Psoas muscle (tissue), 8 donors: ENCODE measurements at regions of chr10 and their contacts with region 1.

Region 1: DNA sequence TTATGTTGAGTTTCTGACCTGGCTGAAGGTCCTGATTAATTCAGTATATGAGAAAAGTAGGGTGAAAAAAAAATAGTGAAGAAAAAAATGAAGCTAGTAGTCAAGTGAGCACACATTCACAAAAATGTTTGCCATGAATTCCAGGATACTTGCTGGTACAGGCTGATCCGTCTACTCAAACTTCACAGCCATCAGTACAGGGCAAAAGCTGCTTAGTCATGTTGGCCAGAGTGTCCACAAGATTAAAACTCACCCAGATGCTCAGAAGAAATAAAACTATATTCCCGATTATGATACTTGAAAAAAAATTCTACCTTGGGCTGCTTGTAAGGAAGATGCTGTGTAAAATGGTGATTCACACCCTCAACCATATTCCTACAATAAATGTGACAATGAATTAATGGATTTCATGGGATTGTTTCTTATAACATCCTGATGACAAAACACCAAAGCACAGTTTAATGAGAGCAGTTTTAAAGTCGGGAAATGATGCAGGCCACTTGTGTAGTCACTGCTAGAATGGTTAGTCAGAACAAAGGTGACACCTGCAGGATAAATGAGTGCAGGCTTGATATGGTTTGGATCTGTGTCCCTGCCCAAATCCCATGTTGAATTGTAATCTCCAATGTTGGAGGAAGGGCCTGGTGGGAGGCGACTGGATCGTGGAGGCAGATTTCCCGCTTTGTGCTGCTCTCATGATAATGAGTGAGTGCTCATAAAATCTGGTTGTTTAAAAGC is 49.2 kb upstream of the ANKRD1 start:
- DNase-seq: no peak
- ATAC-seq: peak; percentile 54 to 78 (median 74)
- H3K4me3 ChIP-seq: peak overlapping the region; percentile 23
- H3K27ac ChIP-seq: peak overlapping the region; percentile 73
- H3K4me1 ChIP-seq: peaks cover 23% of the 10 kb centered on the region
- H3K27me3 ChIP-seq: peaks cover 0 to 3% (median 0%) of the 10 kb centered on the region in 3 donors
- CTCF ChIP-seq: peak; percentile 57

Region 2: DNA sequence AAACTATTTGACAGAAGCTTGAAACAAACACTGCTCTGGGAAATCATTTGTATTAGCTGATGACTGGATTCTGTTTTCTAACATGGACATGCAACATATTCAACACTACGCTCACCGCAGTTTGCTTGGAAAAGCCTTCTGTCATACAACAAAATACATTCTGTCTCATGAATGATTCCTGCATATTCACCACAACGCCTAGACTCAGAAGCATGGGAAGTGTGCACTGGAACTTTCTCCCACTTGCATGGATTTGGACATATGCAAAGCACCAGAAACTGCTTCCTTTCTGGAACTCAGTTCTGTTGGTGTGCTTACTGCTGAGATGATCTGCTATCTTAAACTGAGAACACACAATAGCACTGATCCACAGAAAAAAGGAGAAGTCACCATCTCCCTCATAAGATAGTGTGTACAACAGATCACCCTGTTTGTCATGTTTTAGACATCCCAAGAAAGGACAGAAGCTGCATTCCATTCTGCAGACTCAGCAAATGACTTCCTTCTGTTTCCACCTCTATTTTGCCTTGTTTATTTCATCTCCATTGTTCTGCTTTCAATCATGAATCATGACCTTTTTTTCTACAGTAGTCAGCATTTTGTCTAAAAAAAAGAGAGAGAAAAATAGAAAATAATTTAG is 228.1 kb before region 1 on chr10:
- intact Hi-C with region 1: loop called in 1 of 2 experiments (anchors 10 kb)
- DNase-seq: no peak
- ATAC-seq: no peak
- H3K4me3 ChIP-seq: no peak overlapping the region
- H3K27ac ChIP-seq: no peak overlapping the region
- H3K4me1 ChIP-seq: no peaks in the 10 kb centered on the region
- H3K27me3 ChIP-seq: peaks cover 0 to 4% (median 3%) of the 10 kb centered on the region in 3 donors
- CTCF ChIP-seq: no peak

Region 3: DNA sequence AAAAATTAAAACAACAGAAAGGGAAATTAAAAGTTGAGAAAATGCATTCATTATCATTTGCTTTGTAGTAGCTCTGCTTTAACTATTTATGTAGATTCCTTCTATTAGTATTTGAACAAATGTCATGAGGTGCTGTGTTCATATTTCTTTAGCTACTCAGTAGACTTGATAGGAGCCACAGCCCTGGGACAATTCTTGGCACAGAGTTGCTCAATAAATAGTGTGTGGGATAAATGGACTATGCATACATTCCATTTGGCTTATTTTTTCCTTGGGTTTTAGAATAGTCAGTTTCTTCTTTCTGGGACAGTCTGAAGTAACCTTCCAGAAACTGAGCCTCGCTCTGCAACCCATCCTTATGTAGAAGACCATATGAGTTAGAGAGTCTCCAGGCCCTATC is 84.9 kb before region 1 on chr10:
- intact Hi-C with region 1: loop called in 1 of 2 experiments (anchors 2 kb)
- DNase-seq: no peak
- ATAC-seq: no peak
- H3K4me3 ChIP-seq: no peak overlapping the region
- H3K27ac ChIP-seq: no peak overlapping the region
- H3K4me1 ChIP-seq: peaks cover 16% of the 10 kb centered on the region
- H3K27me3 ChIP-seq: no peaks in the 10 kb centered on the region
- CTCF ChIP-seq: no peak

Region 4: DNA sequence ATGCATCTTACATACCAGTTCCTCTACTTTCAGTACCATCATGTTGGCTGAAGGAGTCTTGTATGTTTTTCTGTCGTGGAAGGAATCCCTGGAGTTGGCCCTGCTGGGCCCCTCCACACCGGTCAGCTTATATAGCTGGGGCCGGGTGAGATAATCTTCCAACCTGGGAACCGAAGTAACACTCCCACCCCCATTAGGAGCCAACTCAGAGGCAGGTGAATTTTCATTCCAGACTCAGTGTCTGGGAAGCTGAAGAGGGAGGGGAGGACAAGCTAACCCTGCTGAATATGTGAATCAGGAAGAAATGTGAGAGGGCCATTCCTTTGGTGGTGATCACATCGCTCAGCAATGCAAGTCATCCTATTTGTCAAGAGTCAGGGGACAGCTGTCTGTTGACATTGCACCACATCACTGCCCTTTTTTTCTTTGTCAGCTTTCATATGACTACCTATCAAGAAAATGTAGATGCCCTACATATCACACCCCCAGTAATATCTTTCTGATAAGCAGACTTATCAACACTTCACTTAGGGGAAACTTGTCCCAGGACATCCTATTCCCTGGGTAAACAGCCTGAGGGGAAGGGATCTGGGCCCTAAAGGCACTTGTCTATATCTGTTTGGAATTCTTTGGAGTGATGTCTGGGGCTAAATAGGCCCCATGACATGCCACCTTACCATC is 49.0 kb before region 1 on chr10 and contains the start of gene ANKRD1:
- intact Hi-C with region 1: loop called in 1 of 2 experiments (anchors 2 kb)
- DNase-seq: peak in 1 of 2 donors; percentile 27
- ATAC-seq: peak; percentile 80 to 92 (median 82)
- H3K4me3 ChIP-seq: peak within 1 kb of the TSS; percentile 76
- H3K27ac ChIP-seq: peak within 1 kb of the TSS; percentile 90
- H3K4me1 ChIP-seq: peaks cover 18% of the 10 kb centered on the region
- H3K27me3 ChIP-seq: no peaks in the 10 kb centered on the region
- CTCF ChIP-seq: no peak
- total RNA-seq, gene ANKRD1: 1,558 to 6,044 (median 2,711) TPM